Activated naive CD8-positive, alpha-beta T cell treated with anti-CD3 and anti-CD28 coated beads, Interleukin-2, amount 10 ng/mL, durations not matched to agents 7 days and 5 days (primary cell): ENCODE measurements at regions of chr2 and their contacts with region 1.

Region 1: DNA sequence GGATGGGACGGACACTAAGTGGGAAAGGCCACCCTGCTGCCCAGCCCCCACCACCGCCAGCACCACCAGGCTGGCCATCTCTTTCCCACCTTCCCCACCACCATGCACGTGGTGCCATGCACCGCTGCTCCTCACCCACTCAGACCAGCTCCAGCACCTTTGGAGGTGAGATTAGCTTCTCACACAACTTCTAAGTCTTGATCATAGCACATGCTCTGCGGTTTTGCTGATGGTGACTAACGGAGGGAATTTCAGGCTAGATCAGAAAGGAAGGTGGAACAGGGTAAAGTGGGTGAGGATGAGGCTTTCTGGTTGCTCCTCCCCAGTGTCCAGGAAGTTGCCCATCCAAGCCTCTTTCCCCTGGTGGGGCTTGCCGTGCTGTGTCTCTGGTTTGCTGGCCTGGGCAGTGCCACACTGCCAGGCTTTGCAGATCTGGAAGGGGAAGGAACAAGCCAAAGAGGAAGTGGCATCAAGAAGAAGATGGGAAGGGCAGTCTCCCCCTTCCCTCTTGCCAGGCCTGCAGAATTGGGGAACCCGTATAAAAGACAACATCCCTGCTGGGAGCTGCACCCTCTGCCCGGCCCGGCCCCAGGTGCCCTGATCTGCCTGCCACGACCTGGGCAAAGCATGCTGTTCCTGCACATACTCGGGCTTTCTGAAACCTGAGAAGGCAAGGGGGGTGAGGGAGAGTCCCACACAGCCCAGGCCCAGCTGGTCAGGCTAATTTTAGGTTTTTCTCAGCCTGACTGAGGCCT is 44.3 kb upstream of the CAB39 start:
- DNase-seq: peak; percentile 41
- ATAC-seq: peak; percentile 23
- H3K4me3 Mint-ChIP-seq: peak overlapping the region; percentile 54
- H3K27ac Mint-ChIP-seq: peak overlapping the region; percentile 79
- H3K4me1 Mint-ChIP-seq: peaks cover 65% of the 10 kb centered on the region
- H3K27me3 Mint-ChIP-seq: no peaks in the 10 kb centered on the region

Region 2: GRCh38 chr2:230485801-230486341 is 182.5 kb before region 1 on chr2:
- POLR2A ChIA-PET with region 1: no interaction called
- DNase-seq: no peak
- ATAC-seq: no peak
- H3K4me3 Mint-ChIP-seq: no peak overlapping the region
- H3K27ac Mint-ChIP-seq: no peak overlapping the region
- H3K4me1 Mint-ChIP-seq: peaks cover 13% of the 10 kb centered on the region
- H3K27me3 Mint-ChIP-seq: no peaks in the 10 kb centered on the region

Region 3: DNA sequence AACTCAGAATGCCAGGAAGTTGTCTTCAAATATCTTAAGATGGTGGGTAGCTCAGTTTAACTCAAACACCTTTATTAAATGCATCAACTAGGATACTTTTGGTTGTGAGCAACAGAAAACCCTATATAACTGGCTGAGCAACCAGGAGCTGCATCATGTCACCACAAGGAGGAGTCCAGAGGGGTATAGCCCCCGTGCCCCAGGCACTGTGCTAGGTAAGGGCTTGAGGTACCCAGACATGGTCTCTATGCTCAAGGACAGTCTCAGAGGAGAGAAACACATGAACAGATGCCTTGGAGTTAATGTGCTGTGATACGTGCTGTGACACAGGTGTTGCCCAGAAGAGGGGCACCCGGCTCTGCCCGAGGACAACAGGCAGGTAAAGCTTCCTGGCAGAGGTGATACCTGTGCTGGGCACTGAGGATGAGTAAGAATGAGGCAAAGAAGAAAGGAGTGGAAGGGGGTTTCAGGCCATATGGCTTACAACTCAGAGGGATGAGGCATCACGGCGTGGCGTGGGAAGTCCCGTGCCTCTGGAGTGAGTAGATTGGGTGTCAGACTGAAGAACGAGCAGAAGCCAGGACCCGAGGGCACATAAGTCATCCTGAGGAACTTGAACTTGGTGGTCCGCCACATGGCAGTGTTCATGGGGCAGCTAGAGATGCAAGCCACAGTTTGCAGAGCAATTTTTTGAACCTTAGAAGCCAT is 12.3 kb after region 1 on chr2:
- POLR2A ChIA-PET with region 1: interaction called, 22 read pairs
- DNase-seq: no peak
- ATAC-seq: no peak
- H3K4me3 Mint-ChIP-seq: no peak overlapping the region
- H3K27ac Mint-ChIP-seq: no peak overlapping the region
- H3K4me1 Mint-ChIP-seq: peaks cover 50% of the 10 kb centered on the region
- H3K27me3 Mint-ChIP-seq: no peaks in the 10 kb centered on the region

Region 4: GRCh38 chr2:230691005-230691647 is 22.8 kb after region 1 on chr2:
- POLR2A ChIA-PET with region 1: no interaction called
- DNase-seq: no peak
- ATAC-seq: no peak
- H3K4me3 Mint-ChIP-seq: no peak overlapping the region
- H3K27ac Mint-ChIP-seq: peak overlapping the region; percentile 43
- H3K4me1 Mint-ChIP-seq: peaks cover 31% of the 10 kb centered on the region
- H3K27me3 Mint-ChIP-seq: no peaks in the 10 kb centered on the region